CD4-positive, alpha-beta T cell (primary cell): ENCODE measurements at regions of chr10 and their contacts with region 1.

Region 1: GRCh38 chr10:17643755-17644484 is at the start of gene STAM:
- DNase-seq: peak; percentile 88 to 96 (median 91)
- ATAC-seq: peak; percentile 88
- H3K4me3 ChIP-seq: peak within 1 kb of the TSS; percentile 75
- H3K4me3 Mint-ChIP-seq: peak within 1 kb of the TSS; percentile 98
- H3K27ac ChIP-seq: peak within 1 kb of the TSS; percentile 96
- H3K27ac Mint-ChIP-seq: peak within 1 kb of the TSS; percentile 100
- H3K4me1 ChIP-seq: peaks cover 41% of the 10 kb centered on the region
- H3K4me1 Mint-ChIP-seq: peaks cover 60% of the 10 kb centered on the region
- H3K27me3 ChIP-seq: no peaks in the 10 kb centered on the region
- H3K27me3 Mint-ChIP-seq: no peaks in the 10 kb centered on the region
- CTCF ChIP-seq: no peak
- total RNA-seq, gene STAM: 52.4 to 53.3 TPM

Region 2: GRCh38 chr10:15859906-15860691 is 1783.8 kb before region 1 on chr10 and contains the start of gene MINDY3:
- CTCF ChIA-PET with region 1: no interaction called
- POLR2A ChIA-PET with region 1: interaction called, 6 read pairs
- intact Hi-C with region 1: loop called in 1 of 2 experiments (anchors 5 kb)
- DNase-seq: peak; percentile 65 to 92 (median 76)
- ATAC-seq: peak; percentile 95
- H3K4me3 ChIP-seq: peak within 1 kb of the TSS; percentile 83
- H3K4me3 Mint-ChIP-seq: peak within 1 kb of the TSS; percentile 98
- H3K27ac ChIP-seq: peak within 1 kb of the TSS in 1 of 2 donors; percentile 56
- H3K27ac Mint-ChIP-seq: peak within 1 kb of the TSS; percentile 89
- H3K4me1 ChIP-seq: peaks cover 10% of the 10 kb centered on the region
- H3K4me1 Mint-ChIP-seq: peaks cover 52% of the 10 kb centered on the region
- H3K27me3 ChIP-seq: peaks cover 0 to 17% of the 10 kb centered on the region in 2 experiments
- H3K27me3 Mint-ChIP-seq: peaks cover 19% of the 10 kb centered on the region
- CTCF ChIP-seq: no peak
- total RNA-seq, gene MINDY3: 39.8 to 40.6 TPM

Region 3: DNA sequence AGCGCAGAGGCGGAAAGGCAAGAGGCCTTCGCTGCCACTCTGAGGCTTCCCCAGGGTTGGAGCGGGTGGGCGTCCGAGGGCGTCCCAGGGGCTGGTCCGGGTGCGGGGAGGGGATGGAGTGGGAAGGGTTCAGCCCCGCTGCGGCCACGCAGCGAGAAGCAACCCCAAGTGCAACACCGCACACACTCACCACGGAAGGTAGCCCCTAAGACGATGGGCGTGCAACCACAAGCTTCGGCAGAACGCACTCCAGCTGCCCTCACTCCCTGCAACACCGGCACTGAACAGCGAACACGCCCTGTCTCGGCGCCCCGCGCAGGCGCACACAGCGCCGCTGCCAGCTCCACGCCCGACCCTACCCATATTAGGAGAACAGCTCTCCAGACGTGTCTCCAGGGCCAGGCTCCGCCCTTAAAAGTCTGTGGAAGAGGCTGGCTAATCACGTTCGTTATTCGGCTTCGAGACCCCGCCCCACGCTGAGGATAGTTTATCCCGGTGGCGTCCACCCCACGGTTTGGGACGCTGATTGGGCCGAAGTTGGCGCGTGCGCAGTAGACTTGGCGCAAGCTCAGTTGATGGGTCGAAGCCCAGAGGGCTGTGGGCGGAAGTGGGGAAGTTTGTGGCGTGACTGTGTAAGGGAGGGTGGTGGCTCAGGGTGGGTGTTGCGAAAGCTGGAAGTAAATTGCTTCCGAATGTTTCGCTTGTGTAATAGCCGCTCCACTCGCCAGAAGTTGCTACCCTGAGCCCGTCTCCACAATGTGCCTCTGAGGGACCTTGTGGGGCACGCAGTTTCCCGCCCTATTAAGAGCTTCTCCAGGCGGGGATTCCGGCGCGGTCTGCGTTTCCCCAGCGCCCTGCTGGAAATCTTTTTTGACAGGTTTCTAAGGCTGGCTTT is 826.5 kb before region 1 on chr10 and contains the start of gene RSU1:
- CTCF ChIA-PET with region 1: no interaction called
- POLR2A ChIA-PET with region 1: interaction called, 15 read pairs
- intact Hi-C with region 1: loop called in 1 of 2 experiments (anchors 5 kb)
- DNase-seq: peak; percentile 99 to 100 (median 100)
- ATAC-seq: peak; percentile 96
- H3K4me3 ChIP-seq: peak within 1 kb of the TSS; percentile 78
- H3K4me3 Mint-ChIP-seq: peak within 1 kb of the TSS; percentile 97
- H3K27ac ChIP-seq: peak within 1 kb of the TSS; percentile 82 to 87
- H3K27ac Mint-ChIP-seq: peak within 1 kb of the TSS; percentile 92
- H3K4me1 ChIP-seq: peaks cover 32% of the 10 kb centered on the region
- H3K4me1 Mint-ChIP-seq: peaks cover 50% of the 10 kb centered on the region
- H3K27me3 ChIP-seq: no peaks in the 10 kb centered on the region
- H3K27me3 Mint-ChIP-seq: no peaks in the 10 kb centered on the region
- CTCF ChIP-seq: no peak
- total RNA-seq, gene RSU1: 26.2 to 28.8 TPM

Region 4: GRCh38 chr10:17497446-17498030 is 146.4 kb before region 1 on chr10:
- CTCF ChIA-PET with region 1: no interaction called
- POLR2A ChIA-PET with region 1: no interaction called
- intact Hi-C with region 1: no loop called
- DNase-seq: no peak
- ATAC-seq: no peak
- H3K4me3 ChIP-seq: no peak overlapping the region
- H3K4me3 Mint-ChIP-seq: no peak overlapping the region
- H3K27ac ChIP-seq: no peak overlapping the region
- H3K27ac Mint-ChIP-seq: no peak overlapping the region
- H3K4me1 ChIP-seq: no peaks in the 10 kb centered on the region
- H3K4me1 Mint-ChIP-seq: no peaks in the 10 kb centered on the region
- H3K27me3 ChIP-seq: peaks cover 0 to 2% of the 10 kb centered on the region in 2 experiments
- H3K27me3 Mint-ChIP-seq: peaks cover 11% of the 10 kb centered on the region
- CTCF ChIP-seq: no peak

Region 5: DNA sequence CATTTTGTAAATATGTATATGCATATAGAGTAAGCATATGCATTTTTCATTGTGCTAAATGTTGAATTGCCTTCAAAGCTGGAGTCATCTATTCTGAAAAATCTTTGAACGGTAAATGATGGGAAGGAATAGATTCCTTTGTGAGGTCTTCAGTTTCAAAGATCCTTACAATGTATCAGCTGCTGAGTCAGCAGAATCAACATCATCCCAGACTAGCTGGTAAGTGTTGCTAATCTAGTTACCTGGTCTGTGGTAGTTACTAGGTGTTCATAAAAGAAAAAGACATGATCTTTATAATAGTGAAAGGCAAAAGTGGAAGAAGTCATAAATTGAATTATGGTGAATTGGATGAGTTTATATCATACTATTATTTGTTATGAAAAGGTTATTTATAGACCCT is 10.6 kb before region 1 on chr10:
- CTCF ChIA-PET with region 1: interaction called, 3 read pairs
- POLR2A ChIA-PET with region 1: interaction called, 12 read pairs
- intact Hi-C with region 1: no loop called
- DNase-seq: no peak
- ATAC-seq: no peak
- H3K4me3 ChIP-seq: no peak overlapping the region
- H3K4me3 Mint-ChIP-seq: no peak overlapping the region
- H3K27ac ChIP-seq: no peak overlapping the region
- H3K27ac Mint-ChIP-seq: no peak overlapping the region
- H3K4me1 ChIP-seq: no peaks in the 10 kb centered on the region
- H3K4me1 Mint-ChIP-seq: no peaks in the 10 kb centered on the region
- H3K27me3 ChIP-seq: no peaks in the 10 kb centered on the region
- H3K27me3 Mint-ChIP-seq: no peaks in the 10 kb centered on the region
- CTCF ChIP-seq: no peak

Region 6: GRCh38 chr10:17662193-17663138 is 18.5 kb after region 1 on chr10:
- CTCF ChIA-PET with region 1: interaction called, 4 read pairs
- POLR2A ChIA-PET with region 1: interaction called, 12 read pairs
- intact Hi-C with region 1: no loop called
- DNase-seq: peak in 2 of 14 experiments; percentile 18 to 31
- ATAC-seq: no peak
- H3K4me3 ChIP-seq: no peak overlapping the region
- H3K4me3 Mint-ChIP-seq: peak overlapping the region; percentile 60
- H3K27ac ChIP-seq: no peak overlapping the region
- H3K27ac Mint-ChIP-seq: peak overlapping the region; percentile 31
- H3K4me1 ChIP-seq: peaks cover 7% of the 10 kb centered on the region
- H3K4me1 Mint-ChIP-seq: peaks cover 64% of the 10 kb centered on the region
- H3K27me3 ChIP-seq: no peaks in the 10 kb centered on the region
- H3K27me3 Mint-ChIP-seq: no peaks in the 10 kb centered on the region
- CTCF ChIP-seq: no peak

Region 7: DNA sequence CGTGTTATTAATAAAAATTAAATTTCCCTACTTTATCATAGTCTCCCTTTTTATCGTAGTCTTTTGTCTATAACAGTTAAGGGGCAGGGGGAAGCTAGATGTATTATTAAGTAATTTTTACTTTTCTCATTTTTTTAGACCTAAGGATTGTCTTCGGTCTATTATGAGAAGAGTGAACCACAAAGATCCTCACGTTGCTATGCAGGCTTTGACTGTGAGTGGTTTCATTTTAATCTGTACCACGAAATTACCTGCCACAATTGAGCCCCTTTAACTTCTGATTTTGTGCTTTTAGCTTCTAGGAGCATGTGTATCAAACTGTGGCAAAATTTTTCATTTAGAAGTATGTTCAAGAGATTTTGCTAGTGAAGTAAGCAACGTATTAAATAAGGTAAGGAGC is 40.6 kb after region 1 on chr10:
- CTCF ChIA-PET with region 1: interaction called, 3 read pairs
- POLR2A ChIA-PET with region 1: interaction called, 7 read pairs
- intact Hi-C with region 1: loop called in 1 of 2 experiments (anchors 5 kb)
- DNase-seq: peak in 2 of 14 experiments; percentile 28 to 32
- ATAC-seq: no peak
- H3K4me3 ChIP-seq: peak overlapping the region; percentile 4
- H3K4me3 Mint-ChIP-seq: no peak overlapping the region
- H3K27ac ChIP-seq: no peak overlapping the region
- H3K27ac Mint-ChIP-seq: peak overlapping the region; percentile 47
- H3K4me1 ChIP-seq: peaks cover 5% of the 10 kb centered on the region
- H3K4me1 Mint-ChIP-seq: peaks cover 53% of the 10 kb centered on the region
- H3K27me3 ChIP-seq: no peaks in the 10 kb centered on the region
- H3K27me3 Mint-ChIP-seq: no peaks in the 10 kb centered on the region
- CTCF ChIP-seq: no peak

Region 8: DNA sequence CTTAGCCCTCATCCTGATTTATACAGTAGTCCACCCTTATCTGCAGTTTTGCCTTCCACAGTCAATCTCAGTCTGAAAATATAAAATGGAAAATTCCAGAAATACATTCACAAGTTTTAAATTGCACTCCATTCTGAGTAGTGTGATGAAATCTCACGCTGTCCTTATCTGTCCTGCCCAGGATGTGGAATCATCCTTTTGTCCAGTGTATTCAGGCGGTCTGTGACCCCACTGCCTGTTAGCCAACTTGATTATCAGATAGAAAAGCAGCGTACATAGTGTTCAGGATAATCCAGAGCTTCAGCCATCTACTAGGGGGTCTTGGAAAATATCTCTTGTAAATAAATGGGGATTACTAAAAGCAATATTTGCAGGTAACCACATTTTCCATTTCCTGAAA is 1550.9 kb after region 1 on chr10:
- CTCF ChIA-PET with region 1: no interaction called
- POLR2A ChIA-PET with region 1: no interaction called
- intact Hi-C with region 1: no loop called
- DNase-seq: no peak
- ATAC-seq: no peak
- H3K4me3 ChIP-seq: no peak overlapping the region
- H3K4me3 Mint-ChIP-seq: no peak overlapping the region
- H3K27ac ChIP-seq: no peak overlapping the region
- H3K27ac Mint-ChIP-seq: no peak overlapping the region
- H3K4me1 ChIP-seq: no peaks in the 10 kb centered on the region
- H3K4me1 Mint-ChIP-seq: no peaks in the 10 kb centered on the region
- H3K27me3 ChIP-seq: no peaks in the 10 kb centered on the region
- H3K27me3 Mint-ChIP-seq: no peaks in the 10 kb centered on the region
- CTCF ChIP-seq: no peak